ENCODE measurements at regions of chr3 and their contacts with region 1.

Region 1: GRCh38 chr3:53195602-53196574 is 34.9 kb downstream of the PRKCD start:
- DNase-seq: peak in 6 of 10 donors; percentile 29 to 87 (median 56)

Region 2: DNA sequence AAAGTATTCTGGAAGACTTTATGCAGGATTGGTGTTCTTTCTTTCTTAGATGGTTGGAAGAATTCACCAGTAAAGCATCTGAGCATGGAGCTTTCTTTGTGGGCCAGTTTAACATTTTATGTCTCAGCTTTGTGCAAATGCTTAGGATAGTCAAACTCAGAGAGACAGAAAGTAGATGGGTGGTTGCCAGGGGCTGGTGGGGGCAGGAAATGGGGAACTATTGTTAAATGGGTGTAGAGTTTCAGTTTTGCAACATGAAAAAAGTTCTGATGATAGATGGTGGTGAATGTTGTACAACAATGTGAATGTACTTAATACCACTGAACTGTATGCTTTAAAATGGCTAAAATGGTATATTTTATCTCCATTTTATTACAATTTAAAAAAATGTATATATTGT is 465.2 kb before region 1 on chr3:
- intact Hi-C with region 1: no loop called
- DNase-seq: no peak

Region 3: DNA sequence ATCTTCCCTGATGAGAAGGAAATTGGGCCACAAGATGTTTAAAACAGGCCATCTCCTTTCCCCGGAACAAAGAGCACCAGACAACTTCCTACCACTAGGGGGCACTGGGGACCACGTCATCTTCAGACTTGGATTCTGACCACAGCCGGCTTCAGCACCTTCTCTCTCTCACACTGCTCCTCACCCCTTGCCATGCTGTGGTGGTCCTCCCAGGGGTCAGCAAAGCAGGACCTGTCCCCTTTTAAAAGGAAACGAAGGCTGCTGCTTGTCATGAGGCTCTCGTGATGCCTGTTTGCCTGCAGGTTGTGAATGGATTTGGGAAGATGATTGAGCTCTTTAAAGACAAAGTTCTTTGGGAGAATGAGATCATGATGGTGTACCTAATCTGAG is 81.9 kb before region 1 on chr3:
- intact Hi-C with region 1: loop called (anchors 1 kb)
- DNase-seq: peak; percentile 63 to 97 (median 87)

Region 4: GRCh38 chr3:53130179-53131061 is 65.5 kb before region 1 on chr3 and contains the start of gene RFT1:
- intact Hi-C with region 1: loop called (anchors 1 kb)
- DNase-seq: peak; percentile 93 to 99 (median 96)

Measured in posterior cingulate gyrus (tissue), 11 donors.